PC-9 (cell line): ENCODE measurements at regions of chr4 and their contacts with region 1.

Region 1: DNA sequence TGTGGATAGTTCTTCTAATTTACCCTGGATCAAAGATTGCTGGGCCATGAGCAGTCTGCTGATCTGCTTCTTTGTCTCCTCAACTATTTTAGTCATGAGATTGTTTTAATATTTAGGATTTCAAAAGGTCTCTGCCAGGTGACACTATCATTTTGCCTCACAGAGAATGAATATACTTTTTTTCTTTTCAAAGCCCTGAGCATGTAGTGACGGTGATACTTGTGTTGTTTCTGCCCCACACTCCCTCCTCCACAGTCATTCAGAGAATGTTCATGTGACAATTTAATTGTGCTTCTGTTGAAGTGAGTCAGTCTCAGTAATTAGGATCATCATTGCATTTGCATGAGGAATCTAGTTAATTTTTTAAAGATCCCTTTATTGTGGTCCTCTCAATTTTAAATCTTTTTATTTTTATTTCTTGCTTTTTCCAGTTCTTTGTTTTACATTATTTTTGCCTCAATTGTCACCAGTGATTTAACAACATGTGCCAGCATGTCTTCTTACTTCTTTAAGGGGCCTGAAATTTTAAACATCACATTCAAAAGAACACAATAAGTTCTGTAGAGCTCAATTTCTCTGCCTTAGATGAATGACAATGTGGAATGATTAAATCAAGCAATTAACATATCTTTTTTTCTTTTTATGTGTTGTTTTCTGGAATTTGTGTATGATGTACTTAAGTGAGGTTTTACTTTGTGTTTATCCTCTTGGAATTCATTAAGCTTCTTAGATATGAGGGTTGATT is 12.3 kb downstream of the MMRN1 start:
- DNase-seq: no peak
- H3K4me3 ChIP-seq: no peak overlapping the region
- H3K27ac ChIP-seq: no peak overlapping the region
- H3K4me1 ChIP-seq: no peaks in the 10 kb centered on the region
- H3K27me3 ChIP-seq: no peaks in the 10 kb centered on the region
- CTCF ChIP-seq: no peak

Region 2: DNA sequence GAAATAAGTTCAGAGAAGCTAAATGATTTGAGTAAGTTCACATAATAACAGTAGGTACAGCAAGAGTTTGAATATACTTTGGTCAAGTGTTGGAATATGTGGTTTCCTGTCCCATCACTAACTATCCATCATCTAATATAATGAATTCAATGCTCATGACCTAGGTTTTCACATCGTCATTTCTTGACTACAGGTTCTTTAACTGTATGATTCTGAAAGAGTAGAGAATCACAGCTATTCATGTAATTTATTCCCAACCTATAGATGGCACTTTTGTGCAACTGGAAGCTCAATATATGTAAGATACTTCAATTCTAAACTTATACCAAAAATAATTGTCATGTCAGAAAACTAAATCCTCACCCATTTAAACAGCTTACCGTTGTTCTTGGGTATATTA is 742.5 kb before region 1 on chr4:
- CTCF ChIA-PET with region 1: interaction called, 9 read pairs
- POLR2A ChIA-PET with region 1: no interaction called
- intact Hi-C with region 1: loop called (anchors 10 kb)
- DNase-seq: no peak
- H3K4me3 ChIP-seq: no peak overlapping the region
- H3K27ac ChIP-seq: no peak overlapping the region
- H3K4me1 ChIP-seq: no peaks in the 10 kb centered on the region
- H3K27me3 ChIP-seq: no peaks in the 10 kb centered on the region
- CTCF ChIP-seq: no peak

Region 3: DNA sequence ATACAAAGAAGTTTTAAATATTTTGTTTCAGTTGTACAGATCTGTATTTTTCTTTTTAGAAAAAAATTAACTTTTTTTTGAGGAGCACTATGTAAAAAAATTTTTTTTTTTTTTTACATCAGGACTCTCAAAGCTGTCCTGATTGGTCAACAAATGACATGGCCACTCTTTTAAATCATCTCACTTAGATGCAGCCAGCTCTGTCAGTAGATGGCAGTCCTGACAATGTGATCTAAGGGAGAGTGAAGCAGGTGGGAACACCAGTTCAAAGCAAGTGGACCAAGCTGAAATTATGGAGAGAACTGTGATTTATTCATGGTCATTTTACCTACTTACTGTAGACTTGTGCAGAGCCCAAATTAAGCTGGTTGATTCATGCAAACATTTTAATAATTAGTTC is 424.7 kb before region 1 on chr4:
- CTCF ChIA-PET with region 1: no interaction called
- POLR2A ChIA-PET with region 1: no interaction called
- intact Hi-C with region 1: loop called (anchors 5 kb)
- DNase-seq: no peak
- H3K4me3 ChIP-seq: no peak overlapping the region
- H3K27ac ChIP-seq: no peak overlapping the region
- H3K4me1 ChIP-seq: no peaks in the 10 kb centered on the region
- H3K27me3 ChIP-seq: no peaks in the 10 kb centered on the region
- CTCF ChIP-seq: peak; percentile 24; the same call in 1 of the 2 replicates

Region 4: DNA sequence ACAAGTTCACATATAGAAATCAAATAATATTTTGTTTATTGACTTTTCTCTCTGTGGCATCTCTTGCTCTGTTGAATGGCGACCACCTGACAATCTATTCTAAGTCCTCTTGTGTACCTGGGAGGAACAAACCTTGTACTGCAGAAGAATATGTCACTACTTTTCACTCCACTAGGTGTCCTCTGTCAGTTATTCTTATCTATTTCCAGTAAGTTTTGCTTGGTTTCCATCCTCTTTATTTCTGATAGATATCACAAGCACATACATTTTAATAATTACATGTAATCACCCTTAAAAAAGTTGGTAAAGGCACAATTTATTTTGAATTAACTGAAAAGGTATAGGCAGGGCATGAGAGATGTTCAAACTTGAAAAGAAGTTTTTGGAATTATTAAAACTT is 308.3 kb before region 1 on chr4:
- CTCF ChIA-PET with region 1: no interaction called
- POLR2A ChIA-PET with region 1: no interaction called
- intact Hi-C with region 1: loop called (anchors 5 kb)
- DNase-seq: no peak
- H3K4me3 ChIP-seq: no peak overlapping the region
- H3K27ac ChIP-seq: no peak overlapping the region
- H3K4me1 ChIP-seq: no peaks in the 10 kb centered on the region
- H3K27me3 ChIP-seq: no peaks in the 10 kb centered on the region
- CTCF ChIP-seq: peak; percentile 46; the same call in 1 of the 2 replicates